Right cardiac atrium (tissue), 5 donors: ENCODE measurements at regions of chr1 and their contacts with region 1.

Region 1: GRCh38 chr1:212062832-212063438 is 27.4 kb downstream of the DTL start:
- DNase-seq: no peak
- ATAC-seq: peak; percentile 28 to 47
- H3K4me3 ChIP-seq: no peak overlapping the region
- H3K27ac ChIP-seq: no peak overlapping the region
- H3K4me1 ChIP-seq: no peaks in the 10 kb centered on the region
- H3K27me3 ChIP-seq: no peaks in the 10 kb centered on the region

Region 2: DNA sequence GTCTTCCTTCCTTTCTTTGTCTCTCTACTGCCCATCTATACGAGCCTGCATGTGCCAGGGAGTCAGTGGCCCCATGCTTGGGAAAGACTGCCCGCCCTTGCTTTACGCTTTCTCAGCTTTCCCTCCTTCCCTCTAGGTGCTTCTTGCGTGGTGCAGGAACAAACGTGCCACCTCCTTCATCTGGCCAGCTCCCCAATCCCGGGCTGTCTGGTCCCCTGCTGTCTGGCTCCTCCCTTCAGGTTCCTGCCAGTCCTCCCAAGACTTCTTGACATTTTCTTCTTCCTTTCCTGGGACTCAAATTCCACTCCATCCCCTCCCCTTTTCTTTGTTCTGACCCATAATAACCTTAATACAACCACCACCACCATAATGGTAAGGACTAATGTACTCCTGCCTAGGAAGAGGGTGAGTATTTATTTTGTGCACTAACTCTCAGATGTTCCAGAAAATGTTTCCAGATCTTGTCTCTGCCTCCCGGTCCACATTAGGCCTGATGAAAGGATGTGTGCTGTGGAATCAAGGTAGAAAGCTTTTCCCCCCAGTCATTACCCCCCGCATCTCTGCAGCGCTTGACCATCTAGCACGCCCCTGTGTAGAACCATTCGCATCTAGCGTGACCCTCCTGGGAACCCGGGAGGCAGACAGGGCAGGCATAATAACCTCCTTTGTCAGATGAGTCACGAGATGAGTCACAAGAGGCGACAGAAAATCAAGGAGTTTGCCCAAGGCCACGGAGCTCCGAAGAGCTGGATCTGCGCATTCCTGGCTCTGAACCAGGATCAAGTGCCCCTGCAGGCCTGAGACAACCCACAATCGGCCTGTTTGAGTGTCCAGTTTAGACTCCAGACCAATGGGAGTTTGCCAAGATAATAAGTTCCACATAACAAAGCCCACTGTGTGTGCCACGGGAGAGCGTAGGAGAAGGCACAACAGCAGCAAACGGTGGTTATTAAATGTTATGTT is 327.4 kb before region 1 on chr1:
- intact Hi-C with region 1: no loop called
- DNase-seq: peak in 2 of 3 donors; percentile 24 to 58
- ATAC-seq: peak; percentile 30 to 53
- H3K4me3 ChIP-seq: no peak overlapping the region
- H3K27ac ChIP-seq: no peak overlapping the region
- H3K4me1 ChIP-seq: no peaks in the 10 kb centered on the region
- H3K27me3 ChIP-seq: no peaks in the 10 kb centered on the region

Region 3: GRCh38 chr1:212368073-212368484 is 305.1 kb after region 1 on chr1:
- intact Hi-C with region 1: loop called in 3 of 4 experiments (anchors 5 kb)
- DNase-seq: peak in 1 of 3 donors; percentile 35
- ATAC-seq: peak; percentile 75 to 88
- H3K4me3 ChIP-seq: no peak overlapping the region
- H3K27ac ChIP-seq: no peak overlapping the region
- H3K4me1 ChIP-seq: no peaks in the 10 kb centered on the region
- H3K27me3 ChIP-seq: no peaks in the 10 kb centered on the region

Region 4: GRCh38 chr1:212463565-212464285 is 400.8 kb after region 1 on chr1:
- intact Hi-C with region 1: loop called in 1 of 4 experiments (anchors 5 kb)
- DNase-seq: no peak
- ATAC-seq: no peak
- H3K4me3 ChIP-seq: no peak overlapping the region
- H3K27ac ChIP-seq: no peak overlapping the region
- H3K4me1 ChIP-seq: no peaks in the 10 kb centered on the region
- H3K27me3 ChIP-seq: no peaks in the 10 kb centered on the region